Transverse colon (tissue), 4 donors: ENCODE measurements at regions of chr10 and their contacts with region 1.

Region 1: DNA sequence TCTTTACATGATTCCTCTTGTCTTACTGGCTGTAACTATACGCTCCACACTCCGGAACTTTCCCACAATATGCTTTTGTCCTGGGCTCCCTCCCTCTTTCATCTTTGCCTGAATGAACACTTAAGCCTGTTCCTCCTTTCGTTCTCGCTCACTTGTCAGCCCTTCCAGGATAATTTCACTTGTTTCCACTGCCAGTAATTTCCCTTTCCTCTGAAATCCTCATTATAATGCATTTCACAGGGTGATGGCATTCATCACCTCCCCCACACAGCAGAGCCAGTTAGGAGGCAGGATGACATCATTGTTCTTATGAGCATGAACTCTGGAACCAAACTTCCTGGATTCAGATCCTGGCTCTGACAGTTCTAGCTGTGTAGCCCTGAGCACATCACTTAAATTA is 372.6 kb downstream of the GPR158 start:
- DNase-seq: no peak
- H3K4me3 ChIP-seq: no peak overlapping the region
- H3K27ac ChIP-seq: no peak overlapping the region
- H3K4me1 ChIP-seq: no peaks in the 10 kb centered on the region
- H3K27me3 ChIP-seq: no peaks in the 10 kb centered on the region
- CTCF ChIP-seq: no peak
- EP300 ChIP-seq: no peak
- POLR2A ChIP-seq: no peak

Region 2: DNA sequence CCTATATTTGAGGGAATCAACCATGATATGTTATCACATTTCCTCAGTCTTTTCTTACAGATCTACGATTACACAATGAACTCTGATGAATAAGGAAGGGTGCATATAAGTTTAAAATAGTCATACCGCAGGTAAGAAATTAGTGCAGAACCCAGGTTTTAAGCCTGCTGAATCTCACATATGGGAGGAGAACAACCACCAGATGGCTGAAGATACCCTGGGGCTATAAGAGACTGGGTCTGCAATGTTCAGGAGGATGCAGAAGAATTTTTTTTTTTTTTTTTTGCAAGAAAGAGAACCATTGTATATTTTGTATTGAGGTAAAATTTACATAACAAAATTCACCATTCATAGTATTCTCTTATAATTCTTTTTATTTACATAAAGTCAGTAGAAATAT is 14.4 kb after region 1 on chr10:
- in situ Hi-C with region 1: no loop called
- intact Hi-C with region 1: loop called (anchors 1 kb)
- DNase-seq: no peak
- H3K4me3 ChIP-seq: no peak overlapping the region
- H3K27ac ChIP-seq: no peak overlapping the region
- H3K4me1 ChIP-seq: no peaks in the 10 kb centered on the region
- H3K27me3 ChIP-seq: no peaks in the 10 kb centered on the region
- CTCF ChIP-seq: no peak
- EP300 ChIP-seq: no peak
- POLR2A ChIP-seq: no peak

Region 3: DNA sequence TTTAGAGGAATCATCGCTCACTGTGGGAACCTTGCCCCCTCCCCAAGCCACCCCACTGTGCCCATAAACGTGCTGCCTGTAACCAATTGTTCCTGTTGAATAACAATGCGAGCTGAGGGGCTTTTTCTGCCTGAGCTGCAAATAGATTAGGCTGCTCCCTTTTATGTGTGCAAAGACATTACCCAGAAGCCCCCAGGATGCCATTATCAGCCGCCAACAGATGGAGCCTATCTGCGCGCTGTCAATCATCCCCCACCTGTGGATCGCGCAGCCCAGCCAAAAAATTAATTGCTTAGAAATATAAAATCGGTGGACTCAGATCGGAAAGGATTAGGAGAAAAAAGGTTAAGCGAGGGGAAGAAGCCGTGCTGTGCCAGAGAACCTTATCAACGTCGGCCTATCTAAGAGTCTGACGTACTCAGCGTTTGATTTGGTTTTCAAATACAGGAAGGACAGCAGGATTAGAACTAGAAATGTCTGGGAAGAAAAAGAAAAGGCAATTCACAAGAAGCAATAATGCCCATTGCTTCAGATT is 219.4 kb after region 1 on chr10:
- in situ Hi-C with region 1: no loop called
- intact Hi-C with region 1: no loop called
- DNase-seq: no peak
- H3K4me3 ChIP-seq: no peak overlapping the region
- H3K27ac ChIP-seq: no peak overlapping the region
- H3K4me1 ChIP-seq: no peaks in the 10 kb centered on the region
- H3K27me3 ChIP-seq: peaks cover 6% of the 10 kb centered on the region
- CTCF ChIP-seq: no peak
- EP300 ChIP-seq: no peak
- POLR2A ChIP-seq: no peak